GM10248 (cell line): ENCODE measurements at regions of chr10 and their contacts with region 1.

Region 1: GRCh38 chr10:62992145-62992721 is 140.9 kb upstream of the NRBF2 start:
- DNase-seq: peak; percentile 48
- CTCF ChIP-seq: no peak

Region 2: GRCh38 chr10:63003816-63004453 is 11.7 kb after region 1 on chr10:
- CTCF ChIA-PET with region 1: interaction called, 21 read pairs
- POLR2A ChIA-PET with region 1: no interaction called
- DNase-seq: peak; percentile 20
- CTCF ChIP-seq: no peak